ENCODE measurements at regions of chr11 and their contacts with region 1.

Region 1: DNA sequence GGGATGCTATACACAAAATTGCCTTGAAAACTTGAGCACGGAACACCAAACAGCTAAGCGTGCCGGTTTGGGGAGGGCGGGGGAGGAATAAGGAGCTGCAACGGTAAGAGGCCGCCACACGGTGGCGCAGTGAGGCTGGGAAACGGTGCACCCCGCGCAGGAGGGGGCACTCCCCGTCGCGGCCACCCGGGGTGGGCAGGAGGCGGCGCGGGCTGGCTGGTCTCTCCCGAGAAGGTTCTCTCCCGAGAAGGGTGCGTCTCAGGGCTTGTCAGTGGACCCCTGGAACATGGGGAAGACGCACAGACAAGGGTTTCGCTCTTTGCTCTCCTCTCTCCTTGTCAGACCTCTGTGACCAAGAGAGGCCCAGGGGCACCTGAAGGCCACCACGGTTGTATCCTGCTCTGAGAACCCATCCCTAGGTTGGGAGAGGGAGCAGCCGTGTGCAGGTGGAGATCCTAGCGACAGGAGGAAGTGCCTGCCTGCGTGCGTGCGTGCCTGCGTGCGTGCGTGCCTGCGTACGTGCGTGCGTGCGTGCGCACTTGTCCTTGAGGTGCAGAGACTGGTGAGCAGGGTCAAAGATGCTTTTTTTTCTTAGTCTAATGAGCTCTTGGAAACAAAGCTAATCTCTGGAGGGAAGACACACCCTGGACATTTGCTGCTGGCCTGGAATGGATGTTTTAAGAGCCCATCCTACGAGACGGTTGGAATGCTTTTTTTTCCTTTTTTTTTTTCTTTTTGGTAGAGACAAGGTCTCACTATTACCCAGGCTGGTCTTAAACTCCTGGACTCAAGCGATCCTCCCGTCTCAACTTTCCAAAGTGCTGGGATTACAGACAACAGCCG is 18.1 kb upstream of the JAM3 start:
- DNase-seq: peak; percentile 49
- ATAC-seq: peak; percentile 84
- H3K4me3 ChIP-seq: peak overlapping the region; percentile 35
- H3K27ac ChIP-seq: no peak overlapping the region
- H3K4me1 ChIP-seq: peaks cover 7% of the 10 kb centered on the region; the same call in 1 of the 2 replicates
- H3K27me3 ChIP-seq: no peaks in the 10 kb centered on the region
- CTCF ChIP-seq: peak; percentile 95
- POLR2A ChIP-seq: peak; percentile 56; the same call in 1 of the 2 replicates
- RAD21 ChIP-seq: peak; percentile 97

Region 2: DNA sequence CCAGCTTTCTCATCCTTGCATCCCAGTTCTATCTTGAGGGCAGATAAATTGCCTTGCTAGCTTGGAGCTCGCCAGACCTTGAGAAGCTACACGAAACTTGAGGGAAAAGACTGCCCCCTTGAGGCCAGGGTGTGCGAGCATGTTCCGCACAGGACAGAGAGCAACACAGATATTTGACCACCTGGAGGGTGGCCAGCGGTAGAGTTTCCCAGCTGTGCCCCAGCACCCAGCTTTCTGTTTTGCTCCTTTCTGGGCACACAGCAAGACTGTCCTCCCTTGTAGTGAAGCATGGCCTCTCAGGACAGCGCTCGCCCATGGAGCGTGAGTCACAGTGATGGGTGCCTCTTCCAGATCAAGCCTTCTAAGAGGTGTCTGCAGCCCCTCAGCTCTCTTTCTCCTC is 229.0 kb before region 1 on chr11:
- CTCF ChIA-PET with region 1: no interaction called
- POLR2A ChIA-PET with region 1: no interaction called
- dilution Hi-C with region 1: no loop called
- in situ Hi-C with region 1: no loop called
- intact Hi-C with region 1: no loop called
- DNase-seq: no peak
- ATAC-seq: no peak
- H3K4me3 ChIP-seq: no peak overlapping the region
- H3K27ac ChIP-seq: no peak overlapping the region
- H3K4me1 ChIP-seq: no peaks in the 10 kb centered on the region
- H3K27me3 ChIP-seq: no peaks in the 10 kb centered on the region
- CTCF ChIP-seq: no peak
- POLR2A ChIP-seq: no peak
- RAD21 ChIP-seq: no peak

Region 3: GRCh38 chr11:133927690-133928627 is 122.8 kb before region 1 on chr11:
- CTCF ChIA-PET with region 1: no interaction called
- POLR2A ChIA-PET with region 1: no interaction called
- dilution Hi-C with region 1: no loop called
- in situ Hi-C with region 1: no loop called
- intact Hi-C with region 1: loop called (anchors 1 kb)
- DNase-seq: peak; percentile 39
- ATAC-seq: peak; percentile 99
- H3K4me3 ChIP-seq: no peak overlapping the region
- H3K27ac ChIP-seq: no peak overlapping the region
- H3K4me1 ChIP-seq: no peaks in the 10 kb centered on the region
- H3K27me3 ChIP-seq: no peaks in the 10 kb centered on the region
- CTCF ChIP-seq: peak; percentile 81
- POLR2A ChIP-seq: no peak
- RAD21 ChIP-seq: peak; percentile 87

Region 4: DNA sequence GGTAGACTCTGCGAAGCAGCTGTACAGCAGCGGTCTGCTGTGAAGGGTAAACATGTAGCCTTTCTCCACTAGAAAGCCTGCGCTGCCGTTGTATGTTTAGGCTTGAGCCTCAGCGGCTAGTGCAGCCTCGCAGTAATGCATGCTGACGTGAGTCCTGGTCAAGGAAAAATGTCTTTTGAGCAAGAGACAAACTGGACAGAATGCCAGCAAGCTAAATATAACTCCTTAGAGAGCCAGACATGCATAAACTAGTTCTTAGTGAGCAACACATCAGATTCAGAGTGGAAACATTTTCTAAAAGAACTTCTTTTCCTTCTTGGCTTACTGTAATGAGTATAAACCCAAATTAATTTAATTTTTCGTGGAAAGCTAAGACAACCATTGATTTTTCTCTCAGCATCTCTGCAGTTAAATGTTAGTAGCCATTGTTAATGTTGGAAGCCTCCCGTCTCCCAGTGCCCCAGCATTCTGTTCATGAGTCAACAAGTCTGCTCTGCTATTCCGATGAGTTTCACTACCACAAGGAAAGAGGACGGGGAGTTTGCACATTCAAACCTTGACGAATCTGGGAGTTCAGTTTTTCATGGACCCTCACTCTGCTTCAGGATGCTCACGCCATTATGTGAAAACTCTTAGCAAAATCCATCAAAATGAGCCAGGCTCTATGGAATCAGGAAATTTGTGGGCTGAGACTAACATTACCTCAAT is 69.5 kb after region 1 on chr11:
- CTCF ChIA-PET with region 1: interaction called, 11 read pairs
- POLR2A ChIA-PET with region 1: no interaction called
- dilution Hi-C with region 1: no loop called
- in situ Hi-C with region 1: no loop called
- intact Hi-C with region 1: no loop called
- DNase-seq: peak; percentile 97
- ATAC-seq: peak; percentile 93
- H3K4me3 ChIP-seq: peak overlapping the region; percentile 16; the same call in 1 of the 2 replicates
- H3K27ac ChIP-seq: peak overlapping the region; percentile 96; the same call in 1 of the 2 replicates
- H3K4me1 ChIP-seq: peaks cover 16% of the 10 kb centered on the region
- H3K27me3 ChIP-seq: no peaks in the 10 kb centered on the region
- CTCF ChIP-seq: no peak
- POLR2A ChIP-seq: peak; percentile 61; the same call in 1 of the 2 replicates
- RAD21 ChIP-seq: no peak

Region 5: GRCh38 chr11:134139873-134140331 is 89.1 kb after region 1 on chr11:
- CTCF ChIA-PET with region 1: interaction called, 9 read pairs
- POLR2A ChIA-PET with region 1: interaction called, 9 read pairs
- dilution Hi-C with region 1: no loop called
- in situ Hi-C with region 1: loop called (anchors 5 kb)
- intact Hi-C with region 1: loop called (anchors 1 kb)
- DNase-seq: peak; percentile 83
- ATAC-seq: peak; percentile 96
- H3K4me3 ChIP-seq: no peak overlapping the region
- H3K27ac ChIP-seq: no peak overlapping the region
- H3K4me1 ChIP-seq: no peaks in the 10 kb centered on the region
- H3K27me3 ChIP-seq: no peaks in the 10 kb centered on the region
- CTCF ChIP-seq: peak; percentile 91
- POLR2A ChIP-seq: no peak
- RAD21 ChIP-seq: peak; percentile 92

Region 6: DNA sequence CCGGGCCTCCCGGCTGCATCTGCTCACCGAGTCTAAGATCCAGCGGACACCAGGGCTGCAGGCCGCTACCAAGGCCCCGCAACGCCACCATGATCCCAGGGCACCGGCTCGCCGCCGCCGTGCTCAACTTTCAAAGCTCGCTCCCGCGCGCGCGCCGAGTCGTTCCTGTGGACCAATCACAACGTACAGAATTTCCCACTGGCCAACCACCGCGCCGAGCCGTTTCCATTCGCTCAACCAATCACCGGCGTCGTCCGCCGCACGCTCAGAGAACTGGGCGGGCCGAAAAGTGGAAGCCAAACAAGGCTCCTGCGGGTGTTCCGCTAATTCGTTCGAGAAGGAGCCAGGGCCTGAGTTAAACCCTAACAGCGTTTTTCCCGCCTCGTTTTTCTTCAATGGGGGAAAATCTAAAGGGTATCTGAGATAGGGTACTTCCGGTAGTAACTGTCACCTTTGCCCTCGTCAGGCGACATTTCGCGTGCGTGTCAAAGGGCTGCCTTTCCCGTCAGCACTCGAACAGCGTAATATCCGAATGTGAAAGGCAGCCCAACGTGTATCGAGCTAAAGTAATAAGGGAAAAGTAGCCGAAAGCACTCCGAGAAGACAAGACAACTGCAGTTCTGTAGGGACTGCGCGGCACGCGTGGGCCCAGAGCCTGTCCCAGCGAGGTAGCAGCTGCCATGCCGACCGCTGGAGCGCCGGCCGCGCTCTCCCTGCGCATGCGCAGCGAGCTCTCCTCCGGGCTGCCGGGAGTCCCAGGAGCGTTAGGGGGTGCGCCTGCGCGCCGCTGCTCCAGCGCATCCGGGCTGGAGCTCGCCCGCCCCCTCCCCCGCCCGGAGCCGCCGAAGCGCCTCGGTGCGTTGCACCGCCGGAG is 173.3 kb after region 1 on chr11 and contains the starts of genes NCAPD3 and VPS26B:
- CTCF ChIA-PET with region 1: no interaction called
- POLR2A ChIA-PET with region 1: no interaction called
- dilution Hi-C with region 1: no loop called
- in situ Hi-C with region 1: no loop called
- intact Hi-C with region 1: loop called (anchors 10 kb)
- DNase-seq: peak; percentile 93
- ATAC-seq: peak; percentile 85
- H3K4me3 ChIP-seq: peak within 1 kb of the TSS; percentile 70
- H3K27ac ChIP-seq: peak within 1 kb of the TSS; percentile 82
- H3K4me1 ChIP-seq: peaks cover 3% of the 10 kb centered on the region; the same call in 1 of the 2 replicates
- H3K27me3 ChIP-seq: no peaks in the 10 kb centered on the region
- CTCF ChIP-seq: no peak
- POLR2A ChIP-seq: peak; percentile 71
- RAD21 ChIP-seq: no peak
- total RNA-seq, gene NCAPD3: 19.2 and 19.7 TPM in 2 replicates
- total RNA-seq, gene VPS26B: 38.9 and 51.1 TPM in 2 replicates

Region 7: DNA sequence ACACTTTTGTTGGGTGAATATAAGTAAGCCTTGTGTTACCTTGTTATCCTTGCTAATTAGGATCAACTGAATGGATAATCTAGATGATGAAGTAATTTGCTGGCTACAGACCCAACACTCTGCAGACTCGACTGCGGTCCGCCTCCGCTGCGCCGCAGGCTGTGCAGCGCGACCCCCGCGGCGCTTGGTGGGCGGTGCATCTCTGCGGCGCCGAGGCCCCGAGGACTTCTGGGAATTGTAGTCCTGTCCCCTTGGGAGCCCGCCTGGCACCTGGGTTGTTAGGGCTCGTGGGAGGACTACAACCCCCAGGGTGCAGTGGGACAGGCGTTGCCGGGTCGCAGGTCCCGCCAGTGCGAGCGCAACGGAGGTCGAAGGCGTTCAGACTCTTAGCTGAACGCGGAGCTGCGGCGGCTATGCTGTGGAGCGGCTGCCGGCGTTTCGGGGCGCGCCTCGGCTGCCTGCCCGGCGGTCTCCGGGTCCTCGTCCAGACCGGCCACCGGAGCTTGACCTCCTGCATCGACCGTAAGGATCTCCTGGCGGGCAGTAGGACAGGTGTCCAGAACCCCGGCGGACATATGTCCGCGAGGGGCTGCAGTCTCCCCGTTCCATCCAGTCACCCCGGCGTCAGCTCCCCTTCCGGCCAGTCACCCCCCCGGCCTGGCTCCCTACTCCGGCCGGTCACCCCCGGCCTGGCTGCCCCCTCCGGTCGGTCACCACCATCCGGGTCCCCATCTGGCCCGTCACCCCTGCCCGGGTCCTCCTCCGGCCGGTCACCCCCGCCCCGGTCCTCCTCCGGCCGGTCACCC is 202.6 kb after region 1 on chr11 and contains the starts of genes ACAD8 and THYN1:
- CTCF ChIA-PET with region 1: interaction called, 3 read pairs
- POLR2A ChIA-PET with region 1: no interaction called
- dilution Hi-C with region 1: no loop called
- in situ Hi-C with region 1: loop called (anchors 10 kb)
- intact Hi-C with region 1: loop called (anchors 10 kb)
- DNase-seq: peak; percentile 95
- ATAC-seq: peak; percentile 99
- H3K4me3 ChIP-seq: peak within 1 kb of the TSS; percentile 61
- H3K27ac ChIP-seq: peak within 1 kb of the TSS; percentile 41
- H3K4me1 ChIP-seq: no peaks in the 10 kb centered on the region; the same call in 1 of the 2 replicates
- H3K27me3 ChIP-seq: no peaks in the 10 kb centered on the region
- CTCF ChIP-seq: no peak
- POLR2A ChIP-seq: 0 out of 2 replicates have a peak, but pooled peaks have one; percentile 22
- RAD21 ChIP-seq: no peak
- total RNA-seq, gene ACAD8: 9.7 and 11.1 TPM in 2 replicates
- total RNA-seq, gene THYN1: 51.9 and 72.1 TPM in 2 replicates

Measured in IMR-90 (cell line).